Right ventricle myocardium superior (tissue), 1 donor: ENCODE measurements at regions of chr7 and their contacts with region 1.

Region 1: GRCh38 chr7:6266699-6267295 is 5.6 kb downstream of the CYTH3 start:
- DNase-seq: no peak
- ATAC-seq: no peak

Region 2: GRCh38 chr7:6228361-6229229 is 38.2 kb before region 1 on chr7:
- intact Hi-C with region 1: loop called (anchors 2 kb)
- DNase-seq: no peak
- ATAC-seq: peak; percentile 60